Activated CD8-positive, alpha-beta T cell treated with anti-CD3 and anti-CD28 coated beads for 36 hours (primary cell): ENCODE measurements at regions of chr17 and their contacts with region 1.

Region 1: DNA sequence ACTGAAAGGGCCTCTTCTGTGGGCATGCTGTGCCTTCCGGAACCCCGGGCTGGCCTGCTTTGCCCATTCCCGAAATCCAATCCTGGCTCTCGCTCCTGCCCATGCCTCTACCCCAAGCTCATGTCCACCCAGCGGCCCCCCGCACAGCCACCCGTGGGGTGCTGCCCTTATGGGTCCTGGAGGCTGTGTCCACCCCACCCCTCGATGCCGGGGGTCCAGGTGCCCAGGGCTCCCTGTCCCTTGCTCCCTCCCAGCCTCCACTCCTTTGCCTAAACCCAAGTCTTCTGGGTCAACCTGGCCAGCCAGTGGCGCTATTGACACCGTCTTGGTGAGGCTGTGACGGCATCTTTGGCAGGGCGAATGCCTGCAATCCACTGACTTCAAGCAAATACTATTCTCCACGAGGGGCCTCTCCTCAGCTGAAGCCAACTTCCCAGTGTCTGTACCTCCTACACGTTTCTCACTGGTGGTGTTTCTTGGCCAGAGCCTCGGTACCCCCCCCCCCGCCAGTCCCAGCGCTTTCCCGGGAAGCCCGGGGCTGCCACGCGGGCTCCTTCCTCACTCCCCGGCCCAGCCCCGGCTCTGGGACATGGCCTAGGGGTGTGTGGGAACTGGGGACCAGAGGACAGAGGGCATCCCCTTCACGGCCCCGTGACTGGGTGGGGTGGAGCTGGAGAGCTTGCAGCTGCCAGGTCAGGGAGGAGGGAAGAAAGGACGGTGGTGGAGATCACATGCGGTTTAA is 12.2 kb upstream of the DUS1L start:
- DNase-seq: no peak
- ATAC-seq: no peak
- H3K4me3 Mint-ChIP-seq: no peak overlapping the region
- H3K27ac Mint-ChIP-seq: no peak overlapping the region
- H3K4me1 Mint-ChIP-seq: no peaks in the 10 kb centered on the region
- H3K27me3 Mint-ChIP-seq: no peaks in the 10 kb centered on the region
- CTCF ChIP-seq: no peak

Region 2: DNA sequence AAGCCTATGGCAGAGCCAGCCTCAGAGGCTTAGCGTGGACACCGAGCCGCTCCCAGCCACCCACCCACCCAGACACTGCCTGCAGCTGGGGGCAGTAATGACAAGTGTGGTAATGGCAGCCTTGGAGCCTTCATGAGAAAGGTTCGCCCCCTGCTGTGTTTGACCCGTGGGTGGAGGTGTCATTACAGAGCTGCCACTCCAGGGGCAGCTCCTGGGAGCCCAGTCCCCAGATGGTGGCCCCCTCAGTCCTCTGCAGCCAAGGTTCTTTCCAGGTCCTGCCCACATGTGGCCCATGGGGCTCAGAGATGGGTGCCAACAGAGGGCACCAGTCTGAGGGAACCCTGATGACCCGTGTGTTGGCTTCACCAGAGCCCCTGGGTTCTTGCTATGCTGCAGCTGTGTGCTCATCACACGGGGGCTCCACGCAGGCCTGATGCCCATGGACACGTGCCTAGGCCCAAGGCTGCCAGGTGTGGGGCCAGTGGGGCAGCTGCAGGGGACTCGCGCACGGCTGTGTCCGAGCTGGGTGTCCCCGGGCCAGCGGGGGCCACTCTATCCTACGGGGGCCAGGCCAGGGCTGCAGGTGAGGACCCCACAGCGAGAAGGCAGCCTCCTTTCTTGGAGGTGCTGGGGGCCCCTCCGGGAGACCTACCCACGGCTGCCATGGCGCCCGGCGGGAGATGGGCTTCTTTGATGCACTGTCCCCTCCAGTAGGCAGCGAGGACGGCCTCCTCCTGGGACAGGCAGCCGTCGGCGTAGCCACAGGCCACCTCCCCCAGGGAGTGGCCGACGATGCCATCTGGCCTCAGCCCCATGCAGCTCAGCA is 12.1 kb after region 1 on chr17:
- CTCF ChIA-PET with region 1: no interaction called
- POLR2A ChIA-PET with region 1: interaction called, 18 read pairs
- intact Hi-C with region 1: no loop called
- DNase-seq: no peak
- ATAC-seq: no peak
- H3K4me3 Mint-ChIP-seq: no peak overlapping the region
- H3K27ac Mint-ChIP-seq: no peak overlapping the region
- H3K4me1 Mint-ChIP-seq: no peaks in the 10 kb centered on the region
- H3K27me3 Mint-ChIP-seq: no peaks in the 10 kb centered on the region
- CTCF ChIP-seq: no peak